CD4-positive, alpha-beta memory T cell (primary cell): ENCODE measurements at regions of chr3 and their contacts with region 1.

Region 1: GRCh38 chr3:192467230-192468140 is 259.9 kb downstream of the FGF12 start:
- DNase-seq: peak in 4 of 5 donors; percentile 26 to 52 (median 33)
- H3K4me3 ChIP-seq: no peak overlapping the region
- H3K4me3 Mint-ChIP-seq: no peak overlapping the region
- H3K27ac ChIP-seq: no peak overlapping the region
- H3K27ac Mint-ChIP-seq: no peak overlapping the region
- H3K4me1 ChIP-seq: no peaks in the 10 kb centered on the region
- H3K4me1 Mint-ChIP-seq: peaks cover 0 to 2% (median under 1%) of the 10 kb centered on the region in 4 donors
- H3K27me3 ChIP-seq: no peaks in the 10 kb centered on the region
- H3K27me3 Mint-ChIP-seq: peaks cover 4 to 11% of the 10 kb centered on the region in 2 donors

Region 2: GRCh38 chr3:192831111-192831644 is 363.7 kb after region 1 on chr3:
- CTCF ChIA-PET with region 1: no interaction called
- POLR2A ChIA-PET with region 1: no interaction called
- intact Hi-C with region 1: no loop called
- DNase-seq: no peak
- H3K4me3 ChIP-seq: no peak overlapping the region
- H3K4me3 Mint-ChIP-seq: peak overlapping the region in 1 of 8 donors; percentile 25
- H3K27ac ChIP-seq: no peak overlapping the region
- H3K27ac Mint-ChIP-seq: peak overlapping the region in 1 of 7 donors; percentile 83
- H3K4me1 ChIP-seq: no peaks in the 10 kb centered on the region
- H3K4me1 Mint-ChIP-seq: peaks cover 5 to 28% (median 21%) of the 10 kb centered on the region in 4 donors
- H3K27me3 ChIP-seq: no peaks in the 10 kb centered on the region
- H3K27me3 Mint-ChIP-seq: no peaks in the 10 kb centered on the region

Region 3: DNA sequence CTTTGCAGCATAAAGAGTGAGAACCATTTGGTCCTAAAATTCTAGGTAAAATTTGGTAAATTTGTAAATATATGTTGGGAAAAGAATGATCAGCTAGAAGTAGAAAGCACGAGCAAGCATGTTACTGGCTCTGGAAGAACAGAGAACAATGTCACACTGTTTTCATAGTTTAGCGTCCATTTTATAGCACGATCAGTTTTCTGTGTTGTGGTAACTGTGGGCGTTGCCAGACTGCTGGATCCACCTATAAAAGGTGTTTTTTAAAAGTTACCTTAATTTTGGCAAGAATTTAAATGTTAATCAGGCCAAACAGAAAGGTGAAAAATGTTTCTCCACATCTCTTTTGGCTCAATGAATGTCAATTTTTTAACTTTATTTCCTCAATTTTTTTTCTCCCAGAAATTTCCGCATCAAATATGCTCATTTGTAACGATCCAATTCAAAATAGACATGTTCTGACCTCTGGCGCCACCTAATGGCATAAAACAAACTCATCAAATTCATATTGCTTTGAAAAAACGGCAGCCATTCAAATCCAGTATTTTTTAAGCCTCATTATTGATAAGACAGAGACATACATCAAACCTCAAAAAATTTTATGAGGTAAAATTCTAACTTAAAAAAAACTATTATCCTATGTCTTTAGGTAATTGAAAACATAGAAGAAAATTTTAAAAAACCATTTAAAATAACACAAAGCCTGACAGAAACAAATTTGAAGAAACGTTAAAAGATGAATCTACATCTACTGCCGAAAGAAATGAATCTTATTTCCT is 1937.1 kb after region 1 on chr3:
- CTCF ChIA-PET with region 1: no interaction called
- POLR2A ChIA-PET with region 1: no interaction called
- intact Hi-C with region 1: loop called (anchors 10 kb)
- DNase-seq: peak; percentile 42 to 61 (median 56)
- H3K4me3 ChIP-seq: no peak overlapping the region
- H3K4me3 Mint-ChIP-seq: peak overlapping the region in 2 of 8 donors; percentile 43 to 75
- H3K27ac ChIP-seq: no peak overlapping the region
- H3K27ac Mint-ChIP-seq: peak overlapping the region in 2 of 7 donors; percentile 1 to 14
- H3K4me1 ChIP-seq: peaks cover 9% of the 10 kb centered on the region
- H3K4me1 Mint-ChIP-seq: peaks cover under 1 to 14% (median 7%) of the 10 kb centered on the region in 4 donors
- H3K27me3 ChIP-seq: no peaks in the 10 kb centered on the region
- H3K27me3 Mint-ChIP-seq: peaks cover 0 to 2% of the 10 kb centered on the region in 2 donors